ENCODE measurements at regions of chr2 and their contacts with region 1.

Region 1: DNA sequence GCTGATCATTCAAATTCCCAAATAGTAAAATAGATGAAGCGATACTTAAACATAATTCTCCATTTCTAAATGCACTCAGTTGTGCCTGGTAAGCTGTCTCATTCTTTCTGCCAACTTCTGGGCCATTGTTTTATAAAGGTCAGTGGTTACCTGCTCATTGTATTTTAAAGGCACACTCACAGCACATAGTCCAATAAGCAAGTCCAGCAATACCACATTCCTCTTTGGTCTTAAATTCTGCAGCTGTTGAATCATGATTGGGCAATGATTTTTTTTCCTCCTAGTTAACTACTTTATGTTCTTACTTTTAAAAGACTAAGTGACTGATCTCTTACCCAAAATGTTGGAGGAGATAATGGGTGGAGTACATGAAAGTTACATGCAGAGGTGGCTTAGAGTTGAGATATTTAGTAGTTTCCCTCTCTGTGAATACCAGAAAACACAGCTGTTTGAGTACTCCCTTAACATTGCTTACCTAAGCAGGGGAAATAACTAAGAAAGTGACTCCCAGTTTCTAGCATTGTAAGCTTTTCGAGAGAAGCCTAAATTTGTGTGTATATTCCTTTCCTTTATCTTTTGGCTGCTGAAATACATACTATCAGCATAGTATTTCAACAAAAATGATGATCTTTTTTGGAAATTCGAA is 220.7 kb downstream of the CAMKMT start:
- DNase-seq: no peak
- ATAC-seq: no peak
- H3K4me3 ChIP-seq: no peak overlapping the region
- H3K4me3 Mint-ChIP-seq: no peak overlapping the region
- H3K27ac ChIP-seq: no peak overlapping the region
- H3K27ac Mint-ChIP-seq: no peak overlapping the region
- H3K4me1 ChIP-seq: peaks cover 24% of the 10 kb centered on the region
- H3K4me1 Mint-ChIP-seq: peaks cover 46% of the 10 kb centered on the region
- H3K27me3 ChIP-seq: no peaks in the 10 kb centered on the region
- H3K27me3 Mint-ChIP-seq: no peaks in the 10 kb centered on the region
- CTCF ChIP-seq: no peak

Region 2: DNA sequence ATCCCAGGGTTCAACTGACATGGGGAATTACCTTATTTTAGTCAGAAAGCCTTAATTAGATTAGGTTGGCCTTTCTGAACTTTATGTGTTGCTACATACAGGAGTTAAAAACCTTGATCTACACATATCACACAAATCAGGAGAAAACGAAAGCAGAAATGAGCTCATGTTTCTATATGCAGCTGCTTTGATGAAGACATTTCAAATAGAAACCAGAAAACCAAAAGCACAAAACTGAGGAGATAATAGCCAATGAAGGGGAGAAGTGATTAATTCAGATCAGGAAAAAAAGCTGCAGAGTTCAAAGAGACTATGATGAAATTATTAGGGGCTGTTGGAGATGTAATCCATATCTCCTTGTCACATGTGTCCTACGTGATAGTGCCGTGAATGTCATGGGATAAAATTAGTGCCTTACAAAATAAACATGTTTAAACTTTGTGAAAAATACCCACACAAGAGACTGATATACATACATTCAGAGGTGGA is 34.2 kb after region 1 on chr2:
- CTCF ChIA-PET with region 1: no interaction called
- POLR2A ChIA-PET with region 1: interaction called, 3 read pairs
- intact Hi-C with region 1: loop called in 1 of 2 experiments (anchors 5 kb)
- DNase-seq: peak in 2 of 9 experiments; percentile 3 to 29
- ATAC-seq: peak; percentile 61
- H3K4me3 ChIP-seq: peak overlapping the region in 1 of 2 experiments; percentile 9
- H3K4me3 Mint-ChIP-seq: no peak overlapping the region
- H3K27ac ChIP-seq: peak overlapping the region in 1 of 2 experiments; percentile 37
- H3K27ac Mint-ChIP-seq: no peak overlapping the region
- H3K4me1 ChIP-seq: peaks cover 26% of the 10 kb centered on the region
- H3K4me1 Mint-ChIP-seq: no peaks in the 10 kb centered on the region
- H3K27me3 ChIP-seq: no peaks in the 10 kb centered on the region
- H3K27me3 Mint-ChIP-seq: no peaks in the 10 kb centered on the region
- CTCF ChIP-seq: no peak

Measured in CD8-positive, alpha-beta T cell (primary cell).